Left cardiac atrium (tissue), 4 donors: ENCODE measurements at regions of chr1 and their contacts with region 1.

Region 1: GRCh38 chr1:232643251-232643650 is 13.3 kb upstream of the SIPA1L2 start:
- DNase-seq: no peak
- ATAC-seq: no peak

Region 2: DNA sequence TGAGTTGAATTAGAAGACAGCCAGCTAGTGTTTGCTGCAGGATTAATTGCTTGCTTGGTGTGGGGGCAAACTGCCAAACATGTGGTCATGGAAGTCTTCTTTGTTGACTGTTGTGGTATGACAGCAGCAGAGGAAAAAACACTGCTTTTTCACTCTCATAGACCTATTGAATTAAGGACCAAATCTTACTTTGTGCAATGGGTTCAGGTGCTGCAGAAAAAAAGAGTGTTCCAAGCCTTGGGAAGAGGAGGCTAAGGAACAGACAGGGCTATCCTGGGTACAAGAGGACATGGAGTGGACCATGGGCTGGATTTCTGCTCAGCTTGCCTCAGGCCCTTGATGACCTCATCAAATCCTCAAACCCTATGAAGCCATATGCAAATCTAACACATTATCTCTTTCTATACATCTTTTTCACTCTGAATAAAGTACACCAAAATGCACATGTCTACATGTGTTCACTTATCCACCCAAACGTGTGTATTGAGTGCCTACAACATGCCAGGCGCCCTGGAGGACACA is 74.9 kb before region 1 on chr1:
- intact Hi-C with region 1: no loop called
- DNase-seq: no peak
- ATAC-seq: no peak

Region 3: GRCh38 chr1:233025157-233025915 is 382.1 kb after region 1 on chr1:
- intact Hi-C with region 1: loop called in 1 of 2 experiments (anchors 5 kb)
- DNase-seq: peak; percentile 30
- ATAC-seq: peak in 1 of 2 donors; percentile 50